HepG2 (cell line): ENCODE measurements at regions of chrX and their contacts with region 1.

Region 1: GRCh38 chrX:110992611-110993010 is 103.4 kb upstream of the PAK3 start:
- DNase-seq: peak; percentile 5
- ATAC-seq: peak; percentile 52
- H3K4me3 ChIP-seq: no peak overlapping the region
- H3K27ac ChIP-seq: no peak overlapping the region
- H3K4me1 ChIP-seq: no peaks in the 10 kb centered on the region
- H3K27me3 ChIP-seq: no peaks in the 10 kb centered on the region
- CTCF ChIP-seq: peak; percentile 43
- EP300 ChIP-seq: no peak
- POLR2A ChIP-seq: no peak
- RAD21 ChIP-seq: no peak

Region 2: GRCh38 chrX:111100186-111100980 is 107.8 kb after region 1 on chrX:
- CTCF ChIA-PET with region 1: interaction called, 3 read pairs
- POLR2A ChIA-PET with region 1: no interaction called
- in situ Hi-C with region 1: no loop called
- intact Hi-C with region 1: loop called (anchors 1 kb)
- DNase-seq: peak; percentile 8
- ATAC-seq: peak; percentile 75
- H3K4me3 ChIP-seq: no peak overlapping the region
- H3K27ac ChIP-seq: no peak overlapping the region
- H3K4me1 ChIP-seq: no peaks in the 10 kb centered on the region
- H3K27me3 ChIP-seq: no peaks in the 10 kb centered on the region
- CTCF ChIP-seq: peak; percentile 49
- EP300 ChIP-seq: no peak
- POLR2A ChIP-seq: no peak
- RAD21 ChIP-seq: no peak